ENCODE measurements at regions of chr6 and their contacts with region 1.

Region 1: GRCh38 chr6:47047479-47048407 is 5.6 kb upstream of the ADGRF1 start:
- DNase-seq: peak in 27 of 42 donors; percentile 14 to 73 (median 38)

Region 2: GRCh38 chr6:46772762-46773161 is 275.0 kb before region 1 on chr6:
- intact Hi-C with region 1: no loop called
- DNase-seq: peak in 24 of 42 donors; percentile 12 to 60 (median 29)

Region 3: GRCh38 chr6:46850792-46851191 is 197.0 kb before region 1 on chr6:
- intact Hi-C with region 1: loop called (anchors 10 kb)
- DNase-seq: no peak

Measured in head of caudate nucleus (tissue), 42 donors.